ENCODE measurements at regions of chr4 and their contacts with region 1.

Region 1: GRCh38 chr4:43277003-43277402 is 384.5 kb downstream of the GRXCR1 start:
- DNase-seq: peak; percentile 29
- H3K27ac ChIP-seq: no peak overlapping the region
- CTCF ChIP-seq: no peak

Region 2: GRCh38 chr4:43296946-43297528 is 20.0 kb after region 1 on chr4:
- CTCF ChIA-PET with region 1: interaction called, 10 read pairs
- POLR2A ChIA-PET with region 1: no interaction called
- DNase-seq: no peak
- H3K27ac ChIP-seq: no peak overlapping the region
- CTCF ChIP-seq: no peak

Region 3: GRCh38 chr4:43357252-43357974 is 80.4 kb after region 1 on chr4:
- CTCF ChIA-PET with region 1: no interaction called
- POLR2A ChIA-PET with region 1: no interaction called
- DNase-seq: no peak
- H3K27ac ChIP-seq: no peak overlapping the region
- CTCF ChIP-seq: no peak